ENCODE measurements at regions of chr4 and their contacts with region 1.

Region 1: GRCh38 chr4:15001869-15002658 is at the start of gene CPEB2:
- DNase-seq: peak; percentile 89
- H3K4me3 Mint-ChIP-seq: peak within 1 kb of the TSS; percentile 87
- H3K27ac Mint-ChIP-seq: peak within 1 kb of the TSS; percentile 92
- H3K4me1 Mint-ChIP-seq: peaks cover 36% of the 10 kb centered on the region
- H3K27me3 Mint-ChIP-seq: no peaks in the 10 kb centered on the region
- total RNA-seq, gene CPEB2: 11.0 and 12.3 TPM in 2 replicates

Region 2: GRCh38 chr4:13654158-13654797 is 1347.8 kb before region 1 on chr4:
- intact Hi-C with region 1: loop called (anchors 2 kb)
- DNase-seq: peak; percentile 70
- H3K4me3 Mint-ChIP-seq: peak overlapping the region; percentile 74
- H3K27ac Mint-ChIP-seq: no peak overlapping the region
- H3K4me1 Mint-ChIP-seq: peaks cover 13% of the 10 kb centered on the region
- H3K27me3 Mint-ChIP-seq: peaks cover 7% of the 10 kb centered on the region

Region 3: GRCh38 chr4:14920759-14921320 is 81.2 kb before region 1 on chr4:
- intact Hi-C with region 1: loop called (anchors 5 kb)
- DNase-seq: no peak
- H3K4me3 Mint-ChIP-seq: no peak overlapping the region
- H3K27ac Mint-ChIP-seq: no peak overlapping the region
- H3K4me1 Mint-ChIP-seq: no peaks in the 10 kb centered on the region
- H3K27me3 Mint-ChIP-seq: peaks cover 2% of the 10 kb centered on the region

Region 4: GRCh38 chr4:15655229-15656037 is 653.4 kb after region 1 on chr4 and contains the start of gene FBXL5:
- intact Hi-C with region 1: loop called (anchors 1 kb)
- DNase-seq: peak; percentile 81
- H3K4me3 Mint-ChIP-seq: peak within 1 kb of the TSS; percentile 93
- H3K27ac Mint-ChIP-seq: peak within 1 kb of the TSS; percentile 96
- H3K4me1 Mint-ChIP-seq: peaks cover 51% of the 10 kb centered on the region
- H3K27me3 Mint-ChIP-seq: no peaks in the 10 kb centered on the region
- total RNA-seq, gene FBXL5: 28.9 and 30.3 TPM in 2 replicates

Region 5: DNA sequence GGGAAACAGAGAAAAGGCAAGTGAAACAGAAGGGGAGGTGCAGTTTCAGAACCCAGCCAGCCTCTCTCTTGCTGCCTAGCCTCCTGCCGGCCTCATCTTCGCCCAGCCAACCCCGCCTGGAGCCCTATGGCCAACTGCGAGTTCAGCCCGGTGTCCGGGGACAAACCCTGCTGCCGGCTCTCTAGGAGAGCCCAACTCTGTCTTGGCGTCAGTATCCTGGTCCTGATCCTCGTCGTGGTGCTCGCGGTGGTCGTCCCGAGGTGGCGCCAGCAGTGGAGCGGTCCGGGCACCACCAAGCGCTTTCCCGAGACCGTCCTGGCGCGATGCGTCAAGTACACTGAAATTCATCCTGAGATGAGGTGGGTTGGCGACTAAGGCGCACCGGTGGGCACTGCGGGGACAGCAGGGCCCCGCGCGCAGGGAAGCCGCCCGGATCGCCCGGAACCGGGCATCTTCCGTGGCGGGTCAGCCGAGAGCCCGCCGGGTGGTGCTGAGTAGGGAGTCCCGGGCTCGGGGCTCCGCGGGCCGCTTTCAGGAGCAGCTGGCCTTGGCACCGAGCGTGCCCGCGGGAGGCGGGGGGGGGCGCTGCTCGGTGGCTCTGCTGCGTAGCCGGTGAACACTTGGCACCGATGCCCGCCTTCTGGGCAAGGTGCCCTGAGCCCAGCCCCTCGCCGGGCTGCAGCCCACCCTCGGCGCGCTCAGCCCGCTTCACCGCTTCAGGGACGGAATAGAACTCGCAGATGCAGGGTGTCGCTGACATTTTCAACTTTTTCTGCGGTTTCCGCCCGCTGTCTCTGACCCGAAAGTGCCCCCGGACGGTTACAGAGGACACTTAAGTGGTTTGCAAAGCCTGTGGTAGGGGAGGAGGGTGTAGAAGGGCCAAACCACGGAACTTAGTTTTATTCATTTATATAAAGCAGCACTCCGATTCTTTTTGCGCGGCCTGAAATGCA is 776.5 kb after region 1 on chr4 and contains the start of gene CD38:
- intact Hi-C with region 1: loop called (anchors 5 kb)
- DNase-seq: peak; percentile 65
- H3K4me3 Mint-ChIP-seq: peak within 1 kb of the TSS; percentile 93
- H3K27ac Mint-ChIP-seq: peak within 1 kb of the TSS; percentile 91
- H3K4me1 Mint-ChIP-seq: peaks cover 69% of the 10 kb centered on the region
- H3K27me3 Mint-ChIP-seq: no peaks in the 10 kb centered on the region
- total RNA-seq, gene CD38: 75.3 and 87.1 TPM in 2 replicates

Measured in activated T-helper 2 cell treated with anti-CD3 and anti-CD28 coated beads, Interferon-gamma antibody, Interleukin-2, Interleukin-4, amounts not matched to agents 10 μg/mL and 5 μg/mL and 100 μg/mL, durations not matched to agents 14 hours and 24 hours and 36 hours (primary cell).